AG04449 (cell line): ENCODE measurements at regions of chr1 and their contacts with region 1.

Region 1: DNA sequence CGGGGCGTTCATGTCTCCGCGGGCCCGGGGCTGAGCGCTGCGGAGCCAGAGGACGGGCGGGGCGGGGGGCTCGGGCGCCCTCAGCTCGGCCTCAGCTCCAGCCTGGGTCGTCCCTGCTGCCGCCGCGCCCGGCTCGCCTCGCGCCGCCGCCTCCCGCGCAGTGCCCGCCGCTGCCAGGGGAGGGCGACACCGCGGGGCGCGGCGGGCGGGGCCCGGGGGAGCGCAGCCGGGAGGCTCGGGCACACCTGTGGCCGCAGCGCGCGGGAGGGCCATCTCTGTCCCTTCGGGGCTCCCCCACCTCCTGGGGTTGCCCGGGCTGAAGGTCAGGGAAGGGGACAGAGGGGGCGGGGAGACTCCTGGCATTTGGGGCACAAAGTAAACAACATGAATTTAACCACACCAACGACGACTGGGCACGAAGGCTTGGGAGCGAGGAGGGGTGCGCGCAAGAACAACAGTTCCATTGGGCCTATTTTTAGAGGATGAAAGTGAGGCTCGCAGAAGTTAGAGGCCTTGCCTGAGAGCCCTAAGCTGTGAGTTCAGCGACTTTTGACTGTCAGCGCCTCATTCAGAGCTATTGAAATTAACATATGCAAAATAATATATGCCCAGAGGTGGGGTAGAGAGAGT is at the start of gene FAM131C:
- DNase-seq: no peak
- H3K4me3 ChIP-seq: peak within 1 kb of the TSS; percentile 52
- CTCF ChIP-seq: peak; percentile 27

Region 2: DNA sequence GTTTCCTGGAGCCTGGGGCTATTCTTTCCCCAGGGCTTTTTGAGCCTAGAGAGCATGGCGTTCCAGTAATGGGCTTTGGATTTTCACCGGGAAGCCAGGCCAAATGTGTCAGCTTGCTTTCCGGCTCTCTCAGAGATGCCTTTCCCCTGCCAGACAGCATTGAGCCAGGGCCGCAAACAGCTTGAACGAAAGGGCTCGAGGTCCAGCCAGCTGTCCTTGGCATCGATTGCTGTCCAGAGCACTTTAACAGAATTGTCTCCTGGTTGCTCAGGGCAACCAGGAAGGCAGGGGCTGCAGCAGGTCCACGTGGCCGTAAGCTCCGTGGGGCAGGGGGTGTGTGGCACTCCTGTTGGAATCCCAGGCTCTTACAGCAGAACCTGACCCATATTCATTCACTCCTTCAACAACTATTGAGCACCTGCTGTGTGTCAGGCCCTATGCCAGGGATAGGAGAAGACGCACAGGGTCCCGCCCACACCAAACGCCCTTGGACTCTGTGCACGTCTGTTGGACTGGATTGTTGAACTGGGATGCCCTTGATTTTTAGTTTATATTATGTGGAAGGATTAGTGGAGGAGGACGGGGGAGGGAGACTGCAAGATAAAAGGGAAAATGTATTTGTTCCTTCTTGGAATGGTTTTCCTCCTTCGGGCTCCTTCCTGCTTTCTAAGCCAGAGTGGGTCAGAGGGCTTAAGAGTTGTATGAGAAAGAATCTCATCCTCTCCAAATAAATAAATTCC is 702.7 kb before region 1 on chr1:
- CTCF ChIA-PET with region 1: no interaction called
- POLR2A ChIA-PET with region 1: no interaction called
- DNase-seq: no peak
- H3K4me3 ChIP-seq: no peak overlapping the region
- CTCF ChIP-seq: no peak

Region 3: DNA sequence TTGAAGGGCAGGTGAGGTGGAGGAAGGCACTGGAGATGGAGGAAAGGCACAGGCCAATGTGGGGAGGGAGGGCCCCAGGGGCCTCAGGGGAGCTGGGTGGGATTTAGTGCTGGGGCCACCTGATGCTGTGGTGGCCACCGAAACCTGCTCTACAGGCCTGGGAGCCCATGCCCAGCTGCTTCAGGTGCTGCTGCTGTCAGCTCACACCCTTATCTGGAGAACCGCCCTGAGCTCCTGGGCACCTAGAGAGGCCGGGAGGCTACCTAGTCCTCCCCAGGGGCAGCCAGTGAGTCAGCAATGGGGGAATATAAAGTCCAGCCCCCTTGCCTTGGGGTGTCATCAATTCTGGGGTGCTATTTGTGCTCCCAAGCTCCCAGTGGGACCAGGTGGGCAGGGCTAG is 12.3 kb before region 1 on chr1:
- CTCF ChIA-PET with region 1: interaction called, 140 read pairs
- POLR2A ChIA-PET with region 1: no interaction called
- DNase-seq: no peak
- H3K4me3 ChIP-seq: no peak overlapping the region
- CTCF ChIP-seq: no peak

Region 4: DNA sequence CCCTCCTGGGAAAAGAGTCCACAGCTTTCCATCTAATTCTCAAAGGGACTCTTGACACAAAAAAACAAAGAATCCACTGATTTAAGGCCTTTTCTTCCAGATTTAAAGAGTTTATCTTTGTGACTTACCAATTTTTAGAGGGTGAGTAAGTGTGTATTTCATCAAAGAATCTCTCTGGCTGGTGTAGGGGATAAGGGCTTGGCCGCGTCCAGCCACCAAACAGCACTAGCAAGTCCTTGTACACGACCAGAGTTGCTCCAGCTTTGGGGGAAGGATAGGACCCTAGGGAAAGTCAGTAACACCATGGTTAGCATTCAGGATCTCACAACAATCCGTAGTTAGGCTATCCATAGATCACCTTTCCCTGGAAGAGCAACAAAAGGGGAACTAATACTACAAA is 182.9 kb after region 1 on chr1:
- CTCF ChIA-PET with region 1: no interaction called
- POLR2A ChIA-PET with region 1: no interaction called
- DNase-seq: no peak
- H3K4me3 ChIP-seq: no peak overlapping the region
- CTCF ChIP-seq: no peak